Mammary epithelial cell (primary cell): ENCODE measurements at regions of chr3 and their contacts with region 1.

Region 1: DNA sequence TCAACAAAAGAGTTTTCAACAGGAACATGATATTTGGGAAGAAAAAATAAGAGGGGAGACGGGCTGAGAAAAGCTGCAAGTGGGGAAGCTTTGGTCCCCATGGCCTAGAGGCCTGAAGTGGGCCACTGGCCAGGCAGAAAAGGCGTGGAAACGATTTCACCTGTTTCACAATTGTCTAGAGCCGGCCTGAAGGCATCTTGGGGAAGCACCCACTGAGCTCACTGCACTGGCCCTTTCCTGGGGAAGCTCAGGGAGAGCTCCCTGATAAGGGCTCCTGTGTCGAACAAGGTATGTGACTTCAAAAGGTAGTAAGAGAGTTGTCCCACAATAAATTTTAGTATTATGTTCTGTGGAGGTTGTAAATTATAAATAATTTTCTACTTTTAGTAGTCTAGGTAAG is 18.0 kb upstream of the TBL1XR1 start:
- DNase-seq: no peak
- H3K4me3 ChIP-seq: no peak overlapping the region
- H3K27ac ChIP-seq: no peak overlapping the region
- H3K4me1 ChIP-seq: peaks cover 2% of the 10 kb centered on the region
- H3K27me3 ChIP-seq: no peaks in the 10 kb centered on the region
- CTCF ChIP-seq: no peak

Region 2: GRCh38 chr3:177263615-177264368 is 48.5 kb after region 1 on chr3:
- CTCF ChIA-PET with region 1: no interaction called
- dilution Hi-C with region 1: loop called (anchors 5 kb)
- in situ Hi-C with region 1: no loop called
- intact Hi-C with region 1: no loop called
- DNase-seq: no peak
- H3K4me3 ChIP-seq: no peak overlapping the region
- H3K27ac ChIP-seq: no peak overlapping the region
- H3K4me1 ChIP-seq: no peaks in the 10 kb centered on the region
- H3K27me3 ChIP-seq: no peaks in the 10 kb centered on the region
- CTCF ChIP-seq: no peak

Region 3: GRCh38 chr3:177491296-177492032 is 276.2 kb after region 1 on chr3:
- CTCF ChIA-PET with region 1: no interaction called
- dilution Hi-C with region 1: no loop called
- in situ Hi-C with region 1: no loop called
- intact Hi-C with region 1: no loop called
- DNase-seq: peak; percentile 32
- H3K4me3 ChIP-seq: no peak overlapping the region
- H3K27ac ChIP-seq: no peak overlapping the region
- H3K4me1 ChIP-seq: peaks cover 15% of the 10 kb centered on the region
- H3K27me3 ChIP-seq: no peaks in the 10 kb centered on the region
- CTCF ChIP-seq: no peak

Region 4: DNA sequence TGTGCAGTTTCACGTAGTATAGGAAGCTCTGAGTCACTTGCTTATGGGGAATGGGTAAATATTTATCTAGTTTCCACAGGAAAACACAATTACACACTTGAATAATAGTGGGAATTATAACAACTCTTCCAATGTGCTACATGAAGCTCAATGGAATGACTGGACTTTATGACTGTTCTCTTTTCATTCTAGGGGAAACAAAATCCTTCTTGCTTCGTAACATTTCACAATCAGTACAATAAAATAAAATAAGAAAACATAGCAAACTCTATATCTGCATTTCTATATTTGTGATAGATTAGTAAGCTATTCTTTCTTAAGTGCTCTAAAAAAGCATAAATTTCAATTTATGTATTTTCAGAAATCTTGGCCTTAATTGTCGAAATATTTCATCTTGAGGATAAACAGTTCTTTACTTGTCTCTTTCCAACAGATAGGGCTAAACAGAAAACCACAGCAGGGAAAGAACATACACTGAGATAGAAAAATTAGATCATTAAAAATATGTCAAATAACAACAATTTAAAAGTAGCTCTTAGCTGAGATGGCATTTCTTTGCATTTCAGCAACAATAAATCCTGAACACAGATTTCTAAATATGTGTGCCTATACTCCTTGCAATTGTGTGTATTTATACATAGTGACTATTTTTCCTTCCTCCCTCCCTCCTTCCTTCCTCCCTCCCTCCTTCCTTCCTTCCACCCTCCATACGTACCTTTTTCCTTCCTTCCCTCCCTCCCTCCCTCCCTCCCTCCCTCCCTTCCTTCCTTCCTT is 925.4 kb after region 1 on chr3:
- CTCF ChIA-PET with region 1: no interaction called
- dilution Hi-C with region 1: no loop called
- in situ Hi-C with region 1: no loop called
- intact Hi-C with region 1: no loop called
- DNase-seq: no peak
- H3K4me3 ChIP-seq: no peak overlapping the region
- H3K27ac ChIP-seq: no peak overlapping the region
- H3K4me1 ChIP-seq: no peaks in the 10 kb centered on the region
- H3K27me3 ChIP-seq: no peaks in the 10 kb centered on the region
- CTCF ChIP-seq: no peak